ENCODE measurements at regions of chr18 and their contacts with region 1.

Region 1: GRCh38 chr18:45384137-45384961 is 230.9 kb upstream of the SLC14A2 start:
- DNase-seq: peak; percentile 16
- ATAC-seq: peak; percentile 60
- H3K4me3 ChIP-seq: no peak overlapping the region
- H3K27ac ChIP-seq: no peak overlapping the region
- H3K4me1 ChIP-seq: no peaks in the 10 kb centered on the region
- H3K27me3 ChIP-seq: no peaks in the 10 kb centered on the region
- CTCF ChIP-seq: peak in 2 of 3 experiments; percentile 49 to 70; a peak in 4 of 6 replicates
- POLR2A ChIP-seq: no peak
- RAD21 ChIP-seq: peak; percentile 34

Region 2: GRCh38 chr18:45275367-45276113 is 108.8 kb before region 1 on chr18:
- CTCF ChIA-PET with region 1: interaction called, 5 read pairs
- POLR2A ChIA-PET with region 1: no interaction called
- RAD21 ChIA-PET with region 1: no interaction called
- intact Hi-C with region 1: loop called (anchors 2 kb)
- DNase-seq: peak; percentile 28
- ATAC-seq: no peak
- H3K4me3 ChIP-seq: no peak overlapping the region
- H3K27ac ChIP-seq: no peak overlapping the region
- H3K4me1 ChIP-seq: no peaks in the 10 kb centered on the region
- H3K27me3 ChIP-seq: no peaks in the 10 kb centered on the region
- CTCF ChIP-seq: peak in 2 of 3 experiments; percentile 66 to 84; a peak in 4 of 6 replicates
- POLR2A ChIP-seq: no peak
- RAD21 ChIP-seq: peak; percentile 37; the same call in 1 of the 2 replicates

Region 3: DNA sequence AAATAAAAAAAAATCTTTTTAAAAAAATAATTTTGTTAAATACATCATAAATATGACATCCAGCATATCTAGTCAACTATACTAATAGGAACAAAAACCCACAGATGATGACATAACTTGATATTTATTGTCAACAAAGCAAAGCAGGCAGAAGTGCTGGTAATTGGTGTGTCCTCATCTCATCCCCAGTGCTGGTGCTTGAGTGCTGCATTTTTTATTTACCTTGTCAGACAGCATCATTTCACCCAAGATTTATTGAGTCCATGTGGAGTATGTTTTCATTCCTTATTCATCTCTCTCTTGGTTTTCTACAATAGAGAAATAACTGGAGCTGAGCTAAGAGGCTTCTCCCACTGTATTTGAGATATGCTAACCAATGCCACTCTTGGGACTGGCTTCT is 39.3 kb after region 1 on chr18:
- CTCF ChIA-PET with region 1: no interaction called
- POLR2A ChIA-PET with region 1: no interaction called
- RAD21 ChIA-PET with region 1: no interaction called
- intact Hi-C with region 1: no loop called
- DNase-seq: no peak
- ATAC-seq: no peak
- H3K4me3 ChIP-seq: no peak overlapping the region
- H3K27ac ChIP-seq: no peak overlapping the region
- H3K4me1 ChIP-seq: no peaks in the 10 kb centered on the region
- H3K27me3 ChIP-seq: no peaks in the 10 kb centered on the region
- CTCF ChIP-seq: no peak
- POLR2A ChIP-seq: no peak
- RAD21 ChIP-seq: no peak